Psoas muscle (tissue), 8 donors: ENCODE measurements at regions of chr16 and their contacts with region 1.

Region 1: DNA sequence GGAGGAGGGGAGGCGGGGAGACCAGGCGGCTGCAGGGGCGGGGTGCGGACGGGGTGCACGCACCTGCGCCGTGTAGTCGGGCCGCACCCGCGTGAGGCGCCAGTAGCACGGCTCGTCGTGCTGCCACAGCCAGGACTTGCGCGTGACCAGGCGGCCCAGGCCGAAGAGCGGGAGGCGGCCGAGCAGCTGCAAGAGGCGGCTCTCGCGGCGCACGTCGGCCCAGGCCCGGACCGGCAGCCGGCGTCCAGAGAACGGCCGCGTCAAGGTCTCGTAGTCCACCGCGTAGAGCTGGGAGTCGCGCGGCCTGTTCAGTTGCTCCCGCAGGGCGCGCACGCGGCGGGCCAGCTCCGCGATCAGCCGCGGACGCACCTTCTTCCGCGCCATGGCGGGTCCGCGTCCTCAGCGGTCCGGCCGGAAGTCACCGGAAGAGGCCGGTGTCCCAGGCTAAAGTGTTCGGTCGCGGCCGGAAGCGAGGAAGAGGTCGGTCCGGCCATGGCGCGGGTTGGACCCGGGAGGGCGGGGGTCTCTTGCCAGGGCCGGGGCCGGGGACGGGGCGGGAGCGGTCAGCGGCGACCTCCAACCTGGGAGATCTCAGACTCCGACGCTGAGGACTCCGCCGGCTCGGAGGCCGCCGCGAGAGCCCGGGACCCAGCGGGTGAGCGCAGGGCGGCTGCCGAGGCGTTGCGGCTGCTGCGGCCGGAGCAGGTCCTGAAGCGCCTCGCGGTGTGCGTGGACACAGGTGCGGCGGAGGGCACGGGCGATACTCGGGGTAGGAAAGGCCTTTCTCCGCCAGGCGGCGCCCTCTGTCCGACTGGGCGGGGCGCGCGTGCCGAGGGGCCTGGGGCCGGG is at the starts of genes EME2 and MRPS34:
- DNase-seq: peak; percentile 87 to 92
- ATAC-seq: peak; percentile 65 to 80 (median 78)
- H3K4me3 ChIP-seq: peak within 1 kb of the TSS; percentile 76
- H3K27ac ChIP-seq: peak within 1 kb of the TSS; percentile 90
- H3K4me1 ChIP-seq: peaks cover 18% of the 10 kb centered on the region
- H3K27me3 ChIP-seq: no peaks in the 10 kb centered on the region
- CTCF ChIP-seq: peak; percentile 66
- total RNA-seq, gene EME2: 4.3 to 11.3 (median 5.9) TPM
- total RNA-seq, gene MRPS34: 56.3 to 75.1 (median 71.4) TPM

Region 2: GRCh38 chr16:1651094-1651973 is 121.6 kb before region 1 on chr16:
- intact Hi-C with region 1: no loop called
- DNase-seq: no peak
- ATAC-seq: peak; percentile 27 to 47 (median 32)
- H3K4me3 ChIP-seq: no peak overlapping the region
- H3K27ac ChIP-seq: no peak overlapping the region
- H3K4me1 ChIP-seq: no peaks in the 10 kb centered on the region
- H3K27me3 ChIP-seq: no peaks in the 10 kb centered on the region
- CTCF ChIP-seq: no peak

Region 3: GRCh38 chr16:1705688-1706385 is 67.1 kb before region 1 on chr16 and contains the start of gene MAPK8IP3:
- intact Hi-C with region 1: loop called in 1 of 2 experiments (anchors 5 kb)
- DNase-seq: peak; percentile 91 to 96
- ATAC-seq: peak; percentile 91 to 93 (median 92)
- H3K4me3 ChIP-seq: peak within 1 kb of the TSS; percentile 96
- H3K27ac ChIP-seq: peak within 1 kb of the TSS; percentile 99
- H3K4me1 ChIP-seq: peaks cover 29% of the 10 kb centered on the region
- H3K27me3 ChIP-seq: no peaks in the 10 kb centered on the region
- CTCF ChIP-seq: peak; percentile 98
- total RNA-seq, gene MAPK8IP3: 22.6 to 31.6 (median 24.9) TPM

Region 4: DNA sequence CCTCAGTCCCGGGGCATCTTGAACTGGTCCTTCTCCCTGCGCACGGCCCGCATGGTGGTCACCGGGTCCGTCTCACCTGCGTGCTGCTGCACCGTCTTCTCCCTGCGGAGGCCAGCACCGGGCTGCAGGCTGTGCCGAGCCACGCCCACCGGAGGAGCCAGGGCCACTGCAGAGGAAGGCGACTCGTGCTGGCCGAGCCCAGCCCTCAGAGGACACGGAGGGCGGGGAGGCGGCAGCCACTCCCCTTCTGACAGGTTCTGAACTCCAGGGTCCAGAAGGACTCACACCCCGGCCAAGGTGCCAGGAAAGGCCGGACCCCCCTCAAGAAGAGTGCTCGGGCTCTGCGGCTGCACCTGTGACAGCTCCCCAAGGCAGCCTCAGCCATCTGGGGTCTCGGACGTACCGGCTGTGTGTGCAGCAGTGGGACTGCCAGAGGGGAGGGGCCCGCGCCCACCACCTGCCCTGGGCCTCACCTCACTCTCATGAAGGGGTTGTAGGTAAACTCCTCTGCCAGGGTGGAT is 36.4 kb after region 1 on chr16:
- intact Hi-C with region 1: no loop called
- DNase-seq: peak in 1 of 2 donors; percentile 39
- ATAC-seq: no peak
- H3K4me3 ChIP-seq: no peak overlapping the region
- H3K27ac ChIP-seq: no peak overlapping the region
- H3K4me1 ChIP-seq: no peaks in the 10 kb centered on the region
- H3K27me3 ChIP-seq: no peaks in the 10 kb centered on the region
- CTCF ChIP-seq: no peak

Region 5: DNA sequence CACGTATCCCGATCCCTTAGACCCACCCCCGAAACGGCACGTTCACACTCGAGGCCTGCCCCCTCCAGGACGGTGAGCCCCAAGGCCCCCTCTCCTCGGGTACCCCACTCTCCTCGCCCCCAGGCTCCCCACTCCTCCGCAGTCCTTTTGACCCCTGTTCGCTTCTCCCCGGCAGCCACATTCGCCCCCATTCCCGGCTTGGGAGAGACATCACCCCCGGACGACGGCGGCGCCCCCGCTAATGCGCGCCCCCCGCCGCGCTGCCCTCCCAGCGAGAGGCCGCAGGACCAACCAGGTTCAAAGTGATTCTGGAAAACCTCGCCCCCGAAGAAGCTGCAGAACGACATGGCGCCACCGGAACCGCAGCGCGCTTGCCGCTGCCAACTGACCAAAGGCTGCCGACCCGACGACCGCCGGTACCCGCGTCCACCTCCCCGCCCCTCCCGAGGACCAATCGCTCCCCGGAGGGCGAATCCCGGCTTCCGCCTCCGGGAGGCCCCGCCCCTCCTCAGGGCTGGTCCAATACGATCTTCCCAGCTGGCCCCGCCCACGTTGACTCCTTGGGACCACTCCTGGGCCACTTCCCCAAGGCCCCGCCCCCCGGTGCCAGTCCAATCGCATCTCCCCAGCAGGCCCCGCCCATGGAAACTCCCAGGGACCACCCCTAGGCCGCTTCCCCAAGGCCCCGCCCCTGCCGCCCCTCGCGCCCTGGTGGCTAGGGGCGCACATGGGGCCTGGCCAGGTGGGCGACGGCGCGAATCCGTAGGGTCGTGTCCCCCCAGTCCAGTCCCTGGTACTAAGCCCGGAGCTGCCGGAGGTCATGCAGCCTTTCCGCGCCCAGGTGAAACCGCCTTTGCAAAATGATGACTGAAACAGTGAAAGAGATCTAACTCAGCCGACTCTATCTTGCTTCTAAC is 170.1 kb after region 1 on chr16 and contains the start of gene MSRB1:
- intact Hi-C with region 1: loop called in 1 of 2 experiments (anchors 10 kb)
- DNase-seq: peak; percentile 100
- ATAC-seq: peak; percentile 83 to 86 (median 84)
- H3K4me3 ChIP-seq: peak within 1 kb of the TSS; percentile 85
- H3K27ac ChIP-seq: peak within 1 kb of the TSS; percentile 89
- H3K4me1 ChIP-seq: peaks cover 65% of the 10 kb centered on the region
- H3K27me3 ChIP-seq: no peaks in the 10 kb centered on the region
- CTCF ChIP-seq: no peak
- total RNA-seq, gene MSRB1: 44.2 to 65.3 (median 53.2) TPM

Region 6: DNA sequence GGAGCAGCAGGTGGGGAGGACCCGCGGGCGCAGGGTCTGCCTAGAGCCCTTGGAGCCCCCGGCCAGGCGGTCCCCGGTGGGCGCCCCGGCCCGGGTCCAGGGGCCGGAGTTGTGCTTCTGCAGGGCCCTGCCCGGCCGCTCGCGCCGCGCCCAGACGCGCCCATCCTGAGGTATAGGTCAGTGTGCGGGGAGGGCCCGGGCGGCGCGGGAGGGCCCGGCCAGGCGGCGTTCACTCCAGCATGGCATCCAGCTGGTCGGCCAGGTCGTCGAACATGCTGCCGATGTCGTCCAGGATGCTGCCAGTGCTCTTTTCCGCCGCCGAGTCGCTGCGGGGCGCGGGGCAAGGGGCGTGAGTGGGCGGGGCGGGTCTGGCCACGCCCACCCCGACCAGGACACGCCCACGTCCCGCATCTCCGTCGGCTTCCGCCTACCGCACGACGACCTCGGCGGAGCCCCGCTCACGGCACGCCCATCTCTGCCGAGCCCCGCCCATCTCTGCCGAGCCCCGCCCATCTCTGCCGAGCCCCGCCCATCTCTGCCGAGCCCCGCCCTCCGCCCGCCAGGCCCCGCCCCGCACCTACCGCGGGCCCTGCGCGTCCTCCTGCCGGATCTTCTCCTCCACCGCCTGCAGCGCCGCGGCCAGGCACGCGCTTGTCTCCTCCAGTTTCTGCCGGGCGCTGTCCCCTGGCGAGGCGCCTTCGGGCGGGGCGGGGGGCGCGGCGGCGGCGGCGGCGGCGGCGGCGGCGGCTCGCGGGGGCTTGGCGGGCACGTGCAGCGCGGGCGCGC is 405.6 kb after region 1 on chr16:
- intact Hi-C with region 1: no loop called
- DNase-seq: no peak
- ATAC-seq: peak; percentile 15 to 77 (median 52)
- H3K4me3 ChIP-seq: no peak overlapping the region
- H3K27ac ChIP-seq: no peak overlapping the region
- H3K4me1 ChIP-seq: no peaks in the 10 kb centered on the region
- H3K27me3 ChIP-seq: no peaks in the 10 kb centered on the region
- CTCF ChIP-seq: no peak